ENCODE measurements at regions of chr5 and their contacts with region 1.

Region 1: DNA sequence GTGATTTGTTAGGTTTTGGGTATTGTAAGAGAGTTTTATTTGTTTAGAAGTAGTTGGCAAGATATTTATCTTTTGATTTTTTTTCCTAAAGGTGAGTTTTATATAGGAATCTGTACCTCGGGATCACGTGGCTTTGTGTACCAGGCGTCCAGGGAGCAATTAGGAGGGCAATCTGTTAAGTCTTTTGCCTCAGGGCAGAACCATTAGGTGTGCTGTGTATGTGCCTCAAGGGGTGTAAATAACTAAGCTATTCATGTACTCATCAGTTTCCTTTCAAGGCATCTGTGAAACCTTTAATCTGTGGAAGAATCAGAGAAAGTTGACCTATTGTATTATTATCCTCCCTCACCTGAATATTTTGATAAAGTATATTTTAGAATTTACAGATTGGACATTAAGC is 39.5 kb downstream of the ZSWIM6 start:
- DNase-seq: no peak
- H3K4me3 ChIP-seq: no peak overlapping the region
- H3K27ac ChIP-seq: no peak overlapping the region
- H3K4me1 ChIP-seq: peaks cover 5% of the 10 kb centered on the region
- H3K27me3 ChIP-seq: no peaks in the 10 kb centered on the region
- CTCF ChIP-seq: no peak
- POLR2A ChIP-seq: no peak

Region 2: GRCh38 chr5:61347080-61347479 is 24.4 kb before region 1 on chr5:
- CTCF ChIA-PET with region 1: interaction called, 3 read pairs
- POLR2A ChIA-PET with region 1: no interaction called
- dilution Hi-C with region 1: no loop called
- intact Hi-C with region 1: loop called (anchors 1 kb)
- DNase-seq: no peak
- H3K4me3 ChIP-seq: no peak overlapping the region
- H3K27ac ChIP-seq: no peak overlapping the region
- H3K4me1 ChIP-seq: peaks cover 26% of the 10 kb centered on the region
- H3K27me3 ChIP-seq: no peaks in the 10 kb centered on the region
- CTCF ChIP-seq: no peak
- POLR2A ChIP-seq: no peak